K562 (cell line): ENCODE measurements at regions of chr6 and their contacts with region 1.

Region 1: DNA sequence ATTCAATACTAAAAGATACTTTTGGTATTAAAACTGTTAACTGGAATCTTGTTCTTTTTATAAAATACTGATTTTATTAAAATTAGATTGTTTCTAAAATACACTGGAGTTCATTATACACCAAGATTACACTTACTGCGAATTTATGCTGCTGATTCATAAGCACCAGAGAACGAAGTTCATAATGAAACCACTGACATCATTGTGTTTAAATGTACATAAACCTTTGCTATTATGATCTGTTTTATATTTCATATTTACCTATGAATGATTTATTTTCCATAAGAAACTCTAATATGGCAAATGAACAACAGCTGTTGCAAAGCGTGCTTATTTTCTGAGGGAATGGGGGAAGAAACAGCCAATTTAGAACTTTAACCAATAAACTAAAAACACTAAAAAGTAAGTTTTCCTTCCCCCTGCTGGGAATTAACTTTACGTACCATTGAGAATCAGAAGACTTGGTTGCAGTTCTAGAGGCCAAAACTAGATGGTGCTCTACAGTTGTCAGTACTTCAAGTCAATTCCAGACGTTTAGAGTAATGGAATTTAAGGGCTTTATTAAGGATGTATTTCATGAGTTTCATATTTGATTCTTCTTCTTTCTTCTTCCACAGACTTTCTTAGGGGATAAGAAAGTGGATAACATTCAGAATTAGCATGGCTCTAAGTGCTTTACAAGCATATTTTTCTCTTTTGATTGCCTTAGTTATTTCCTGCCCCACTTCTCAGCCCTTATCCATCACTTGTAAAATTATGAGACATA is 30.8 kb upstream of the COL19A1 start:
- DNase-seq: peak in 3 of 4 experiments; percentile 8 to 50 (median 36)
- ATAC-seq: peak; percentile 82
- H3K4me3 ChIP-seq: no peak overlapping the region
- H3K27ac ChIP-seq: no peak overlapping the region
- H3K4me1 ChIP-seq: no peaks in the 10 kb centered on the region
- H3K27me3 ChIP-seq: no peaks in the 10 kb centered on the region; a peak in 1 of 5 replicates
- CTCF ChIP-seq: peak; percentile 67 to 77 (median 74); a peak in 5 of 6 replicates
- EP300 ChIP-seq: no peak
- POLR2A ChIP-seq: no peak
- RAD21 ChIP-seq: peak; percentile 48 to 63

Region 2: GRCh38 chr6:69848552-69848951 is 13.0 kb after region 1 on chr6:
- CTCF ChIA-PET with region 1: no interaction called
- POLR2A ChIA-PET with region 1: no interaction called
- in situ Hi-C with region 1: no loop called
- intact Hi-C with region 1: no loop called
- DNase-seq: no peak
- ATAC-seq: no peak
- H3K4me3 ChIP-seq: no peak overlapping the region
- H3K27ac ChIP-seq: no peak overlapping the region
- H3K4me1 ChIP-seq: no peaks in the 10 kb centered on the region
- H3K27me3 ChIP-seq: no peaks in the 10 kb centered on the region
- CTCF ChIP-seq: no peak
- EP300 ChIP-seq: no peak
- POLR2A ChIP-seq: no peak
- RAD21 ChIP-seq: no peak

Region 3: DNA sequence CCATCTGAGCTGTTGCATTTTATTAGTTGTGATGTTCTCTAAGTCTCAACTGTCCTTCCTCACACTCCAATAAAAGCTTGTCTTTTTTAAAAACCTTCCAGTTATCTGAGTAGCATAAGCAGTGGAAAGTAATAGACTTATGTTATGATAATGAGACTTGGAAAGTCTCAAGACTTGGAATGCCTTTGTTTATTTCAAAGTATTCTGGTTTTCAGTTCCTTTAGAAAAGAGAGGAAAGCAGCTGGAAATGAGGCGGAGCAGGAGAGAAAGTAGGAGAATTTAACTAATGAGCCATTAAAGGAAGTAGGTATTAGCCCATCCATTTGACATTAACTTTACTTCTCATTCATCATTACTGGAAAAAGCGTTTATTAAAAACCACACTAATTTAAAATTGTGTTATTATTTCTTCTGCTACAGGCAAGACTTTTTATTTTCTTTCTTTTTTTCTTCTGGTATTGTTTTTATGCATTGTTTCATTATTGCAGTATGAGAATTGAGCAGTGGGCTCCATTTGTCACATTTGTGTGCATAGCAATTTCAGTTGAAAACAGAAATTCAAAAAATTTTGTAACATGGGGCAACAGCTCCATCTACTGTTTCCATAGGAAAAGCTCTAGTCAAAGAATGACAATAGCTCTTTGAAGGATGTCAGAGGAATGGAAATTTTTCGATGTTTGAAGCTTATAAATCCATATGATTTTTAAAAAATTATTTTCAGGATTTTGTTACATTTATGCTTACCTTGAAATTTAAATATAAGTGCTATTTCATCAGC is 272.4 kb after region 1 on chr6:
- CTCF ChIA-PET with region 1: no interaction called
- POLR2A ChIA-PET with region 1: no interaction called
- in situ Hi-C with region 1: no loop called
- intact Hi-C with region 1: loop called (anchors 2 kb)
- DNase-seq: peak; percentile 34 to 55 (median 36)
- ATAC-seq: peak; percentile 61; the same call in 2 of the 3 replicates
- H3K4me3 ChIP-seq: no peak overlapping the region
- H3K27ac ChIP-seq: no peak overlapping the region
- H3K4me1 ChIP-seq: no peaks in the 10 kb centered on the region
- H3K27me3 ChIP-seq: no peaks in the 10 kb centered on the region; a peak in 1 of 5 replicates
- CTCF ChIP-seq: peak; percentile 30 to 75 (median 53); a peak in 4 of 6 replicates
- EP300 ChIP-seq: no peak
- POLR2A ChIP-seq: no peak
- RAD21 ChIP-seq: peak; percentile 83 to 84

Region 4: GRCh38 chr6:70166088-70166958 is 330.7 kb after region 1 on chr6:
- CTCF ChIA-PET with region 1: interaction called, 5 read pairs
- POLR2A ChIA-PET with region 1: no interaction called
- in situ Hi-C with region 1: no loop called
- intact Hi-C with region 1: loop called (anchors 5 kb)
- DNase-seq: peak; percentile 59 to 78 (median 69)
- ATAC-seq: peak; percentile 84
- H3K4me3 ChIP-seq: no peak overlapping the region
- H3K27ac ChIP-seq: no peak overlapping the region
- H3K4me1 ChIP-seq: peaks cover 5 to 27% of the 10 kb centered on the region in 2 experiments
- H3K27me3 ChIP-seq: no peaks in the 10 kb centered on the region; a peak in 2 of 5 replicates
- CTCF ChIP-seq: peak; percentile 78 to 92 (median 86)
- EP300 ChIP-seq: no peak
- POLR2A ChIP-seq: no peak
- RAD21 ChIP-seq: peak; percentile 77 to 87